ENCODE measurements at regions of chr17 and their contacts with region 1.

Region 1: GRCh38 chr17:82297714-82298537 is 19.5 kb downstream of the CD7 start:
- DNase-seq: peak; percentile 92 to 98
- ATAC-seq: peak; percentile 72 to 74
- H3K4me3 ChIP-seq: peak overlapping the region; percentile 42
- H3K27ac ChIP-seq: peak overlapping the region; percentile 96 to 98
- H3K4me1 ChIP-seq: peaks cover 69% of the 10 kb centered on the region
- CTCF ChIP-seq: peak; percentile 15; the same call in 1 of the 3 replicates
- EP300 ChIP-seq: peak in 1 of 2 experiments; percentile 56; a peak in 2 of 5 replicates
- POLR2A ChIP-seq: peak; percentile 63
- RAD21 ChIP-seq: no peak; a peak in 1 of 5 replicates

Region 2: DNA sequence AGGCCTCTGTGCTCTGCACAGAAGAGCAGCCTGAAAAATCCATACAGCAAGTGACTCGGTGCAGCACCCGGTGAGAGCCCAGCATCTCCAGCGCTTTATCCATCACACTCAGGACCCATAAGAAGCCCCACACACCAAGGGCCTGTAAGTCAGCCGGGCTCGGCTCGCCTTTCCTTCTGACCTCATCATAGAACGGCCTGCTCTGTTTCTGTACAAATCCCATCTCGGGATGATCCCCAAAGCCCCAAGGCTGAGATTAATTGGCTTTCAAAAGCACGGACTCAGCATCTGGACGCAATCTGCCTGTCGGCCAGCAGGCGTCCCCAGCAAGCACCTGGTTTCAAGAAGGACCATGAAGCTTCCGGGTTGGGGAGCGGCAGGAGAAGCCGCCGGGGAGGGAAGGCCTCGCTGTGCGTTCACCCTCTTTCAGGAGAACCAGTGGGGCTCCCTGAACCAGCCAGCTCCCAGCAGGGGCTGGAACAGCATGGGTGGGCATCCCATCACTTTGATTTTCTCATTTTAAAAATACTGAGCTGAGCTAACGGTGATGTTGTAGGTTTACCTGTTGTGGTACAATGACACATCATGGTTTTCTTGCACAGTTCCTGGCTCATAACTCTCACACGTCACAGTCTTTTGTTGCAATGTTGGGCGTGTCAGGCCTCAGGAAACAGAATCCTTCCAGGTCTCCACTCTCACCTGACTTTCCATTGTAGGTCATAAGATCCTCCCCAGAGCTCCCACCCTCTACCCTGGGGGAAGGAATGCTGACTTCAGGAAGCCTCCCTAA is 92.0 kb before region 1 on chr17:
- CTCF ChIA-PET with region 1: interaction called, 11 read pairs
- POLR2A ChIA-PET with region 1: interaction called, 3 read pairs
- DNase-seq: peak; percentile 91 to 94
- ATAC-seq: peak; percentile 91 to 94
- H3K4me3 ChIP-seq: no peak overlapping the region
- H3K27ac ChIP-seq: peak overlapping the region; percentile 84 to 86
- H3K4me1 ChIP-seq: peaks cover 24% of the 10 kb centered on the region
- CTCF ChIP-seq: peak; percentile 78
- EP300 ChIP-seq: no peak
- POLR2A ChIP-seq: peak; percentile 81
- RAD21 ChIP-seq: peak; percentile 72 to 75

Region 3: DNA sequence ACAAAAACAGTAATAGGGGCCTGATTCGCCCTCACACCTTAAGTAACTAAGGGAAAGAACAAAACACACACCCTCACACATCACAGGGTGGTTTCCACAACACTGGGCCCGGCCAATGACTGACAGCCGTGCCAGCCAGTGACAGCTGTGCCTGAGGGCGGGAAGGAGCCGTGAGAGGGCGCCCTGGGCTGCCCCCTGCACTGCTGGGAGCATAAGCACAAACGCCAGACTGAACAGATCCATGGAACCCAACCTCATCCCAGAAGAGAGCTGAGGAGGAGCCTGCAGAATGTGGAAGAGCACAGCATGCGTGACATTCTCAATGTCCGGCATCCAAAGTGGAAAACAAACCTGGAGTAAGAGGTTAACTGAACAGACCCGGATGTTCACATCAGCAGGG is 40.5 kb before region 1 on chr17:
- CTCF ChIA-PET with region 1: interaction called, 21 read pairs
- POLR2A ChIA-PET with region 1: interaction called, 3 read pairs
- DNase-seq: peak in 1 of 2 experiments; percentile 74
- ATAC-seq: peak; percentile 76 to 91
- H3K4me3 ChIP-seq: no peak overlapping the region
- H3K27ac ChIP-seq: no peak overlapping the region
- H3K4me1 ChIP-seq: 0 out of 3 replicates have a peak, but pooled peaks cover 6% of the 10 kb centered on the region
- CTCF ChIP-seq: no peak
- EP300 ChIP-seq: no peak
- POLR2A ChIP-seq: no peak
- RAD21 ChIP-seq: no peak

Region 4: GRCh38 chr17:82283208-82283749 is 14.6 kb before region 1 on chr17:
- CTCF ChIA-PET with region 1: interaction called, 18 read pairs
- POLR2A ChIA-PET with region 1: interaction called, 39 read pairs
- DNase-seq: peak; percentile 69
- ATAC-seq: peak; percentile 48 to 57
- H3K4me3 ChIP-seq: no peak overlapping the region
- H3K27ac ChIP-seq: peak overlapping the region; percentile 82 to 87
- H3K4me1 ChIP-seq: peaks cover 46% of the 10 kb centered on the region
- CTCF ChIP-seq: no peak
- EP300 ChIP-seq: peak; percentile 21 to 48; a peak in 2 of 5 replicates
- POLR2A ChIP-seq: no peak
- RAD21 ChIP-seq: no peak; a peak in 1 of 5 replicates

Region 5: GRCh38 chr17:82332669-82333278 is 34.8 kb after region 1 on chr17:
- CTCF ChIA-PET with region 1: interaction called, 343 read pairs
- POLR2A ChIA-PET with region 1: interaction called, 14 read pairs
- DNase-seq: peak; percentile 58 to 69
- ATAC-seq: peak; percentile 37 to 46
- H3K4me3 ChIP-seq: peak overlapping the region; percentile 66
- H3K27ac ChIP-seq: peak overlapping the region; percentile 89 to 93
- H3K4me1 ChIP-seq: peaks cover 55% of the 10 kb centered on the region
- CTCF ChIP-seq: no peak
- EP300 ChIP-seq: no peak
- POLR2A ChIP-seq: no peak
- RAD21 ChIP-seq: no peak

Region 6: DNA sequence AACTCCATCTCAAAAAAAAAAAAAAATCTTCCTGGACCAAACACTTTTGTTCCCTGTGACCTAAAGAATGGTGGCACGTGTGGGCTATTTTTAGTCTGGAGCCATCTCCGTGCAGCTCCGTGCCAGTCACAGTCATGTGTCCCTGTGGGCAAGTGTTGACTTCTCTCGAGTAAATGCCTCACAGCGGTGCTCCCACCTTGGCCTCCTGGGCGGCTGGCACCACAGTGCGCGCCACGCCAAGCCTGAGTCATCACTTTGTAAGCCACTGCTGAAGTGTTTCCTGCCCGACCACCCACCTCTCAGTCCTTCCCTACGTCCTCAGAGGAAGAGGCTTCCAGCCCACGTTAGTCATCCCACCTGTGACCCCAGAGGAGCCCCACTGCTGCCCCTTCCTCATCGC is 109.3 kb after region 1 on chr17:
- CTCF ChIA-PET with region 1: interaction called, 22 read pairs
- POLR2A ChIA-PET with region 1: no interaction called
- DNase-seq: peak in 1 of 2 experiments; percentile 33
- ATAC-seq: peak in 1 of 2 experiments; percentile 24; a peak in 1 of 6 replicates
- H3K4me3 ChIP-seq: no peak overlapping the region
- H3K27ac ChIP-seq: peak overlapping the region in 1 of 2 experiments; percentile 8; a peak in 1 of 6 replicates
- H3K4me1 ChIP-seq: peaks cover 7% of the 10 kb centered on the region
- CTCF ChIP-seq: no peak
- EP300 ChIP-seq: 0 out of 5 replicates have a peak, but pooled peaks of 1 of the 2 experiments have one; percentile 9
- POLR2A ChIP-seq: no peak
- RAD21 ChIP-seq: no peak

Measured in A549 (cell line).